Transverse colon (tissue), 4 donors: ENCODE measurements at regions of chr7 and their contacts with region 1.

Region 1: GRCh38 chr7:114832906-114833595 is 88.8 kb upstream of the MDFIC start:
- DNase-seq: no peak
- H3K4me3 ChIP-seq: no peak overlapping the region
- H3K27ac ChIP-seq: no peak overlapping the region
- H3K4me1 ChIP-seq: no peaks in the 10 kb centered on the region
- H3K27me3 ChIP-seq: no peaks in the 10 kb centered on the region
- CTCF ChIP-seq: no peak
- EP300 ChIP-seq: no peak
- POLR2A ChIP-seq: no peak

Region 2: GRCh38 chr7:113684165-113684564 is 1148.9 kb before region 1 on chr7:
- in situ Hi-C with region 1: no loop called
- intact Hi-C with region 1: no loop called
- DNase-seq: no peak
- H3K4me3 ChIP-seq: no peak overlapping the region
- H3K27ac ChIP-seq: no peak overlapping the region
- H3K4me1 ChIP-seq: no peaks in the 10 kb centered on the region
- H3K27me3 ChIP-seq: no peaks in the 10 kb centered on the region
- CTCF ChIP-seq: no peak
- EP300 ChIP-seq: no peak
- POLR2A ChIP-seq: no peak

Region 3: GRCh38 chr7:114190387-114190786 is 642.7 kb before region 1 on chr7:
- in situ Hi-C with region 1: no loop called
- intact Hi-C with region 1: loop called (anchors 10 kb)
- DNase-seq: no peak
- H3K4me3 ChIP-seq: no peak overlapping the region
- H3K27ac ChIP-seq: no peak overlapping the region
- H3K4me1 ChIP-seq: peaks cover 0 to 11% (median 1%) of the 10 kb centered on the region in 4 donors
- H3K27me3 ChIP-seq: no peaks in the 10 kb centered on the region
- CTCF ChIP-seq: no peak
- EP300 ChIP-seq: no peak
- POLR2A ChIP-seq: no peak

Region 4: GRCh38 chr7:114901781-114902180 is 68.7 kb after region 1 on chr7:
- in situ Hi-C with region 1: no loop called
- intact Hi-C with region 1: no loop called
- DNase-seq: no peak
- H3K4me3 ChIP-seq: no peak overlapping the region
- H3K27ac ChIP-seq: no peak overlapping the region
- H3K4me1 ChIP-seq: no peaks in the 10 kb centered on the region
- H3K27me3 ChIP-seq: no peaks in the 10 kb centered on the region
- CTCF ChIP-seq: no peak
- EP300 ChIP-seq: no peak
- POLR2A ChIP-seq: no peak

Region 5: DNA sequence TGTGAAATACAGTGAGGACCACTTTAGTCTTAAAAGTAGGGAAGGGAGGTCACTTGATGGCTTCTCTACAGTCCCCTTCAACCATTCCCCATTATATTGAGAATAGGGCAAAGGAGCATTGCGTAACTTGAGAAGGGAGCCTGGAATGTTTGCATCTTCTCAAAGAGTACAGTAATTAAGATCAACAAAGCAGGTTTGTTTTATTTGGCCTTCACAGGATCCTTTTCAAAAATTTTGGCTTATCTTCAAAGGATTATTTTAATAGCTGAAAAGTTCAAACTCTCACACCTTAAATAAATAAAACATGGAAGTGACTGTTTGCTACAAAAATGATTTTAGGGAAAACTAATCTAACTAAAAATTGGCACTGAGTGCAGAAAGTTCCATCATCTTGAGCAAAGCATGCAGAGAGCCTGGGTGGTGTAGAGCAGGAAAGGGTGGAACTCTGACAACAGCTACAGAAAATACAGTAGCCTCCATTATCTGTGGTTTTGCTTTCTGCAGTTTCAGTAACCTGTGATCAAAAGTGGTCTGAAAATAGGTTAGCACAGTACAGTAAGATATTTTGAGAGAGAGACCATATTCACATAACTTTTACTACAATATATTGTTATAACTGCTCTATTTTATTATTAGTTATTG is 302.8 kb after region 1 on chr7:
- in situ Hi-C with region 1: no loop called
- intact Hi-C with region 1: no loop called
- DNase-seq: no peak
- H3K4me3 ChIP-seq: no peak overlapping the region
- H3K27ac ChIP-seq: no peak overlapping the region
- H3K4me1 ChIP-seq: peaks cover 0 to 7% (median 0%) of the 10 kb centered on the region in 4 donors
- H3K27me3 ChIP-seq: no peaks in the 10 kb centered on the region
- CTCF ChIP-seq: no peak
- EP300 ChIP-seq: no peak
- POLR2A ChIP-seq: no peak